Astrocyte of the cerebellum (primary cell): ENCODE measurements at regions of chr16 and their contacts with region 1.

Region 1: DNA sequence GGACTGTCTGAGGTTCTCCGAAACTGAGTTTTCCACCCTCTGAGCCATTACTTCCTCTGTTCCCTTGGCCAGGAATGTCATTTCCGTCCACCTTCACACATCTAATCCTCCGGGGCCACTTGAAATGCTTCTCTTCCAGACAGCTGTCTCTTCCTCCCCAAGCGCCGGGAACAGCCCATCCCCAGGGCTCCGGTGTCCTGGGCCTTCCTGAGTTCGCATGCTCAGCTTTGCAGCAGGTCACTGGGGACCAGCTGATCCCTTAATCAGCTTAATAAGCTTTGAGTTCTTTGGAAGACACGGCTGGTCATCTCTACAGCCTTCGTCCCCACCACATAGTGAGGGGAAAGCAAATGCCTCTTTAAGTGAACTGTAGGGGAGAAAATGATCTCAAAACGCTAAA is 123.4 kb downstream of the DYNLRB2 start:
- DNase-seq: no peak
- H3K4me3 ChIP-seq: no peak overlapping the region
- CTCF ChIP-seq: no peak

Region 2: GRCh38 chr16:80627108-80627507 is 37.1 kb before region 1 on chr16:
- in situ Hi-C with region 1: loop called (anchors 5 kb)
- DNase-seq: no peak
- H3K4me3 ChIP-seq: no peak overlapping the region
- CTCF ChIP-seq: no peak

Region 3: GRCh38 chr16:80710918-80711317 is 46.7 kb after region 1 on chr16:
- in situ Hi-C with region 1: loop called (anchors 5 kb)
- DNase-seq: no peak
- H3K4me3 ChIP-seq: no peak overlapping the region
- CTCF ChIP-seq: no peak